Endothelial cell of umbilical vein (primary cell): ENCODE measurements at regions of chr9 and their contacts with region 1.

Region 1: DNA sequence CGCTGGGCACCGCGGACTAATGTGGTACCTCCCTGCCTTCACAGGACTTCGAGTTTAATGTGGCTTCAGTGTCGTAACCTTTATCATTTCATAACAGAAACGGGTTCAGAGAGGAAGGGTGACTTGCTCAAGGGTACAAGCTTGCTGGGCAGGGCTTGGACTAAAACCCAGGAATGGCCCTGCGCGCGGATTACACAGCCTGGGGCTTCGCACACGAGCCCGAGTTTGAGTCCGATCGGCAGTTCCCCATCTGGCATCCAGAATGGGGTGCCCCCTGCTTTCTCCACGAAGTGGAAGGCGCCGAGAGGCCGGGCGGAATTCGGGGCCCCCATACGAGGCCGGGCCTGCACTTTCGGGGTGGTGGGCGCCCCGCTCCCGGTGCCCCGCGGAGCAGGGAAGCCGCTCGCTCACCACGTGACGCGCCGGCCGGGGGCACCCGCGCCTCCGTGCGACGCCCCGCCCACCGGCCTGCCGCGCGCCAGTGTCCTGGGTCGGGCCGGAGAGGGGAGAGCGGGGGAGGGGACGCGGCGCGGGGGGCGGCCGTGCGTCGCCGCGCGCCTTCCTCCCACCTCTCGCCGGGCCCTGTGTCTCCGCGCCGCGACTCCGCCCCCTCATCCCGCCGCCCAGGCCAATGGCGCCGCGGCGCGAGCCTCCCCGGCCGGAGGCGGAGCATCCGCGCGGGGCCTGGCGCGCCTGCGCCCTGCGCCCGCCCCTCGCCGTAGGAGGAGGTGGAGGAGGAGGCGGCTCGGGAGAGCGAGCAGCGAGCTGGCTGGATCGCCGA is at the start of gene SET:
- DNase-seq: peak; percentile 94
- H3K4me3 ChIP-seq: peak within 1 kb of the TSS; percentile 50 to 79 (median 78)
- H3K27ac ChIP-seq: peak within 1 kb of the TSS; percentile 61
- H3K4me1 ChIP-seq: peaks cover 18% of the 10 kb centered on the region
- H3K27me3 ChIP-seq: no peaks in the 10 kb centered on the region
- CTCF ChIP-seq: no peak
- POLR2A ChIP-seq: no peak
- total RNA-seq, gene SET: 448 and 483 TPM in 2 replicates

Region 2: GRCh38 chr9:128635283-128636023 is 53.2 kb before region 1 on chr9:
- CTCF ChIA-PET with region 1: interaction called, 10 read pairs
- POLR2A ChIA-PET with region 1: interaction called, 3 read pairs
- dilution Hi-C with region 1: no loop called
- intact Hi-C with region 1: loop called (anchors 1 kb)
- DNase-seq: peak; percentile 86
- H3K4me3 ChIP-seq: no peak overlapping the region
- H3K27ac ChIP-seq: peak overlapping the region; percentile 64
- H3K4me1 ChIP-seq: peaks cover 11% of the 10 kb centered on the region
- H3K27me3 ChIP-seq: no peaks in the 10 kb centered on the region
- CTCF ChIP-seq: peak; percentile 83 to 86
- POLR2A ChIP-seq: peak; percentile 61

Region 3: DNA sequence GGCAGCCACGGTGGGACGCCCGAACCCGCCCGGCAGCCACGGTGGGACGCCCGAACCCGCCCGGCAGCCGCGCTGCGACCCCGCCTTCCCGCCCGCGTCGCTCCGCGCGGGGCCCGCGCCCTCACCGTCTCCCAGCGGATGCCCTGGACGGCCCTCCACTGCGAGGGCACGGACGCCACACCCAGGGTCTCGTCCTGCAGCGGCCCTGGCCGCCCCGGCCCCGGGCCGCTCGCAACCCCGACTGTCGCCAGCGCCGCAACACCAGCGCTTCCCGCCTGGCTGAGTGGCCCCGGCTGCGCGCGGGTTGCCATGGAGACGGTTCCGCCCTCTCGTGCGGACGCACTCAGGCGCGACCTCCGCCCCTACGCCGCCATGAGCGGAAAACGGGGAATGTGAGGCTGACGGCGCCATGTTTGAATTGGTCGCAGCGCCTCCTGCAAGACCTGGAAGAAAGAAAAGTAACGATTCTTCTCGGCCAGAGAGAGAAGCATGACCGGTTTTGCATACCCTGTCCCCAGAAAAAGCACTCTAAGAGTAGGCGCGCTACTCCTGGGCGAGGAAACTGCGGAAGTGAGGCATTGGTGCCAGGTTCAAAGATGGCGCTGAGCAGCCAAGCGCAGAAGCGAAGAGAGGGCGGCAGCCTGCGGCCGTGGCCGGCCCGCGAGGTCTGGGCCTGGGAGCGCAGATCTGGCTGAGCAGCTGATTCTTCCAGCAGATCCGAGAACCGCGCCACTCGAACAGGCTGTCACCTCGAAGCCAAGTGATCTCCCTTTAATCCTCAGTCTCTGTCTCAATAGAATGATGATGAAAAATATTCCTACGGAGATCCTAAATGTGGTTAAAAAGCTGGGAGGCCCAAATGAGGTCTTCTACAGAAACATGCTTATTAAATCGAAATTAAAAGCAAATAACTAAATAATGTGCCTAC is 32.0 kb before region 1 on chr9 and contains the start of gene DYNC2I2:
- CTCF ChIA-PET with region 1: interaction called, 3 read pairs
- POLR2A ChIA-PET with region 1: no interaction called
- dilution Hi-C with region 1: no loop called
- intact Hi-C with region 1: loop called (anchors 2 kb)
- DNase-seq: peak; percentile 95
- H3K4me3 ChIP-seq: peak within 1 kb of the TSS; percentile 57 to 87 (median 65)
- H3K27ac ChIP-seq: peak within 1 kb of the TSS; percentile 86
- H3K4me1 ChIP-seq: peaks cover 2% of the 10 kb centered on the region
- H3K27me3 ChIP-seq: no peaks in the 10 kb centered on the region
- CTCF ChIP-seq: no peak
- POLR2A ChIP-seq: peak; percentile 77
- total RNA-seq, gene DYNC2I2: 68.5 and 73.6 TPM in 2 replicates

Region 4: GRCh38 chr9:128702445-128702948 is 13.8 kb after region 1 on chr9 and contains the start of gene PKN3:
- CTCF ChIA-PET with region 1: interaction called, 12 read pairs
- POLR2A ChIA-PET with region 1: no interaction called
- dilution Hi-C with region 1: no loop called
- intact Hi-C with region 1: loop called (anchors 1 kb)
- DNase-seq: peak; percentile 83
- H3K4me3 ChIP-seq: peak within 1 kb of the TSS; percentile 68 to 80 (median 71)
- H3K27ac ChIP-seq: peak within 1 kb of the TSS; percentile 38
- H3K4me1 ChIP-seq: peaks cover 14% of the 10 kb centered on the region
- H3K27me3 ChIP-seq: no peaks in the 10 kb centered on the region
- CTCF ChIP-seq: peak; percentile 95 to 97
- POLR2A ChIP-seq: peak; percentile 69
- total RNA-seq, gene PKN3: 39.3 and 40.4 TPM in 2 replicates

Region 5: DNA sequence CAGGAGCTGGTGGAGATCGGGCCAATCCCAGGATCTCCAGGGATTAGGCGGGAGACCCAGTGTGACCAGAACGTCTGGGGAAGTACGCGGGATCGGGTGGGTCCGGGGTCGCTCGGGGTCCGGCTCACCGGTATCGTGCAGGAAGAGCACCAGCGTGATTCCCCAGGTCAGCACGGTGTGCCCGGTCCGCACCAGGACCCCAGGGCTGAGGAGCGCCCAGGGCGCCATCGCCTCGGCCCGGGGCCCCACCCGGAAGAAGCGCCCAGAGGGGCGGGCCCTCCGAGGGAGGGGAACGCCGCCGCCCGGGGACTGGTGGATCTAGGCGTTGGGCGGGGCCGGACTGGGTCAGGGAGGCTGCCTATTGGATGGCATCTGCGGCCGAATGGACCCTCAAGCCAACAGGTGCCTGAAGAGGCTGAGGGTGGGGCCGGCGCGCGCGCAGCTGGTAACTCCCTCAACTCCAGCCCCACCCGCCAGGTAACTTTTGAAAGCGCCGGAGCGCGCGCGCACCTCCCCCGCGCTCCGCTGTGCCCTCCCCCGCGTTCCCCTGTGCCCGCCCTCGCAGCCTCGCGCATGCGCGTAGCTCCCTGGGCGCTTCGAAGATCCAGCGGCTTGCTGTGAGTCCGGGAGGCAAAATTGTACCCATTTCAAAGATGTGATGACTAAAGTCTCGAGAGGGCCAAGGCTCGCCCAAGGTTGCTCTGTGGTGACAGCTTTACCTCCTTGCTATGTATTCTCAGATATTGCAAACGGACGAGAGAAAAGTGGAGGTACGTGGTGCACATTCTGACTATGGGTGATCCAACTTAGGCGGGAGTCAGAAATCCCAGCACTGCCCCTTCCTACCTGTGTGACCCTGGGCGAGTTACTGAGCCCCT is 35.4 kb after region 1 on chr9 and contains the start of gene ZDHHC12:
- CTCF ChIA-PET with region 1: no interaction called
- POLR2A ChIA-PET with region 1: no interaction called
- dilution Hi-C with region 1: no loop called
- intact Hi-C with region 1: loop called (anchors 1 kb)
- DNase-seq: peak; percentile 95
- H3K4me3 ChIP-seq: peak within 1 kb of the TSS; percentile 53 to 69 (median 58)
- H3K27ac ChIP-seq: no peak within 1 kb of the TSS
- H3K4me1 ChIP-seq: peaks cover 5% of the 10 kb centered on the region
- H3K27me3 ChIP-seq: no peaks in the 10 kb centered on the region
- CTCF ChIP-seq: no peak
- POLR2A ChIP-seq: peak; percentile 94
- total RNA-seq, gene ZDHHC12: 28.8 and 31.1 TPM in 2 replicates

Region 6: DNA sequence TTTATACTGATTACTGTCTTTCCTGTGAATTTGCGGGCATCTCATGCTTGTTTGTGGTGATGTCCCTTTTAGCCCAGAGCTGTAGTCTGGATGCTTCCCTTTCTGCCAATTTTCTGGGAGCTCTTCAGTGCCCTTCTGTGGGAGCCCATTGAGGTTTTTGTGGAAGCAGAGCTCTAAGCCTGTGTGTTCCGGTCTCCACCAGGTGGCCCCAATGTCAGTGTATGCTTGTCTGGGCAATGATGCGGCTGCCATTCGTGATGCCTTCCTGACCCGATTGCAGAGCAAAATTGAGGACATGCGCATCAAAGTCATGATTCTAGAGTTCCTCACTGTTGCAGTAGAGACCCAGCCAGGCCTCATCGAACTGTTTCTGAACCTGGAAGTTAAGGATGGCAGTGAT is 304.3 kb after region 1 on chr9:
- CTCF ChIA-PET with region 1: no interaction called
- POLR2A ChIA-PET with region 1: no interaction called
- dilution Hi-C with region 1: no loop called
- intact Hi-C with region 1: no loop called
- DNase-seq: no peak
- H3K4me3 ChIP-seq: no peak overlapping the region
- H3K27ac ChIP-seq: no peak overlapping the region
- H3K4me1 ChIP-seq: no peaks in the 10 kb centered on the region
- H3K27me3 ChIP-seq: no peaks in the 10 kb centered on the region
- CTCF ChIP-seq: peak; percentile 9 to 31
- POLR2A ChIP-seq: no peak